ENCODE measurements at regions of chr14 and their contacts with region 1.

Region 1: DNA sequence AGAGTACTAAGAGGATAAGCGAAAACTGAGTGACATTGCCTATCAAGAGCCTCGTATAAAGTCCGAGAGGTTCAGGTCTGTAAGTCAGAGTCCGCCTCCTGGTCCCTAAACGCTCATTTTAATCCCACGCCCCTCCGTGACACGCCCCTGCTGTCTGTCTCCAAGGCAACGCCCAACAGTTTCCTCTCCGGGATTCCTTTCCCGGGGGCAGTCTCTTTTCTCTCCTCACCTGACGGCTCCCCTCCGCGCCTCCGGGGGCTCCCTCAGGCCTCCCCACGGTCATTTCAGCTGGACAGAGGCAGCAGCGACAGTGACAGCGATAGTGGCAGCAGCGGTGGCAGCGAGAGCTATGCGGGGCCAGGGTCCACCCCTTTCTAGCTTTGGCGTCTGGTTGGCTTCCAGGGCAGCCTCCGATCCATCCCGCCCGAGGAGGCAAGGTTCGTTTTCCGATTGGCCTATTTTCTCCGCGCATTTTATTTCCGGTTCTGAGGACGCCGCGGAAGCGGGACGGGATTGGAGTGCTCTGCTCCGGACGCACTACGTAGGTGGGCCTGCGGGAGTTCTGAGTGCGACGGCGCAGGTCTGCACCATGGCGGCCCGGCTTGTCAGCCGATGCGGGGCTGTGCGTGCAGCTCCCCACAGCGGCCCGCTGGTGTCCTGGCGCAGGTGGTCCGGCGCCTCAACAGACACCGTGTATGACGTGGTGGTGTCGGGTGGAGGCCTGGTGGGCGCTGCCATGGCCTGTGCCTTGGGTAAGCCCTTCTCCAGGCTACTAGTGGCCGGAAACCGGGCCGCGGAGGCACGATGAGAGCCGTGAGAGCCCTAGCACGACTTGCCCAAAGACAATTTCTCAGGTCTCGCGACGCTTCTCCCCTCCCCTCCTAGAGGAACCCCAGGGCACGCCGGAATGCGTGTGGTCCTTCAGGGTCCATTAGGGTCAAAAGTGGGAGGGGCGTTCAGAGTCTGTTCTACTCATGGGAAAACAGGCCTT is at the starts of genes COQ6 and FAM161B:
- DNase-seq: peak; percentile 82 to 98 (median 90)
- ATAC-seq: peak; percentile 92
- H3K4me3 ChIP-seq: peak within 1 kb of the TSS; percentile 74 to 83
- H3K4me3 Mint-ChIP-seq: peak within 1 kb of the TSS; percentile 98
- H3K27ac ChIP-seq: peak within 1 kb of the TSS; percentile 93 to 95
- H3K27ac Mint-ChIP-seq: peak within 1 kb of the TSS; percentile 96
- H3K4me1 ChIP-seq: peaks cover 10% of the 10 kb centered on the region
- H3K4me1 Mint-ChIP-seq: peaks cover 26% of the 10 kb centered on the region
- H3K27me3 ChIP-seq: no peaks in the 10 kb centered on the region
- H3K27me3 Mint-ChIP-seq: no peaks in the 10 kb centered on the region
- CTCF ChIP-seq: no peak
- total RNA-seq, gene COQ6: 33.9 to 44.4 TPM
- total RNA-seq, gene FAM161B: 1.9 to 3.2 TPM

Region 2: DNA sequence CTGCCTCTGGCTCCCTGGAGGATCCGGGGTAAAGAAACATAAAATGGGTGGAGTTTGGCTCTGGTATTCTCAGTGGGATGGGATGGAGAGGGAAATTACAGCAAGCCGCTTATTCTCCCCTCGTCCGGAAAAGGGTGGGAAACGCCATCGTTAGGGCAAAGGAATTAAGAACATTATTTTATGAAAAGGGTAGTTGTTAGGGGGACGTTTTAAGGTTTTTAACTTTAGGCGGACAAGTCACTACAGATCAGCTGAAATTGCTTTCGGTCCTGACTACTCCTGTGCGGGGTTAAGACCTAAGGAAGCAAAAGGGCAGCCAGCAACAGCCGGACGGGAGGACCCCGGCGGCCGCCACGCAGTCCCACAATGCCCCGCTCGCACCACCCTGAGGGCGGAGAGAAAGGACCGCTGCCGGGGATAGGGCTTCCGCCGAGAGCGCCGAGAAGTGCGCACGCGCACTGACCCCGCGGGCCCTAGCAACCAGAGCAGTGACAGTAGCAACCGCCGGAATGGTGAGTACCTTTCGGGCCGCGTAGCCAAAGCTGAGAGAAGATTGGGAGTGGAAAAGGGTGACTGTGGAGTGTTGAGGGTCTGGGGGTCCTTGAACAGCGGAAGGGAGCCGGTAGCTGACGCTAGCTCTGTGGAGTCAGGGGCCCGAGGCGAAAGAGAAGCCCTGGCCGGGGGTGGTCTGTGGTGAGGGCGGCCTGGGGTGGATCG is 305.4 kb before region 1 on chr14 and contains the start of gene DNAL1:
- CTCF ChIA-PET with region 1: no interaction called
- POLR2A ChIA-PET with region 1: no interaction called
- intact Hi-C with region 1: loop called in 1 of 2 experiments (anchors 1 kb)
- DNase-seq: peak; percentile 83 to 94 (median 90)
- ATAC-seq: peak; percentile 97
- H3K4me3 ChIP-seq: peak within 1 kb of the TSS; percentile 67 to 72
- H3K4me3 Mint-ChIP-seq: peak within 1 kb of the TSS; percentile 89
- H3K27ac ChIP-seq: peak within 1 kb of the TSS; percentile 61 to 76
- H3K27ac Mint-ChIP-seq: peak within 1 kb of the TSS; percentile 85
- H3K4me1 ChIP-seq: peaks cover 15% of the 10 kb centered on the region
- H3K4me1 Mint-ChIP-seq: peaks cover 17% of the 10 kb centered on the region
- H3K27me3 ChIP-seq: no peaks in the 10 kb centered on the region
- H3K27me3 Mint-ChIP-seq: no peaks in the 10 kb centered on the region
- CTCF ChIP-seq: no peak
- total RNA-seq, gene DNAL1: 2.8 to 3.3 TPM

Region 3: DNA sequence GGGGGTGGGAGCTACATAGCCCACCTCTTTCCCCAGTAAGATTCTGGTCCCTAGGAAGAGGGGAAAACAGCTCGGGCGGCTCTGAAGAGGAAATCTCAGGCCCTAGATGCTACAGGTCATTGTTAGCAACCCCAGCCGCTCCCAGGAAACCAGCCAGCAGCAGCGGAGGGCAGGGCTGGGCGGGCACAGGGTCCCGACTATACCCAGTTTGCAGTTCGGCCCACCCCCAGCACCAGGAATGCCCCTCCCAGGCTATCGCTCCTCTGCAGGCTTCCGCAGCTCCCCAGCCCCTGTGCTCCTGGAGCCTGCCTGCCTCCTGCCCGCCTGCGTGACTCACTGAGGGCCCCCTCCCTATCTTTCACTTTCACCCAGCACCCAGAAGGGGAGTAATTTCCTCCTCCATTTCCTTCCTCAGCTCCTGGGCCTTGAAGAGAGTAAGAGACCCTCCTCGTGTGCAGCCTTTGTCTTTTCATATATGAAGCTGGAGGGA is 208.6 kb before region 1 on chr14:
- CTCF ChIA-PET with region 1: no interaction called
- POLR2A ChIA-PET with region 1: no interaction called
- intact Hi-C with region 1: loop called in 1 of 2 experiments (anchors 5 kb)
- DNase-seq: peak in 7 of 9 experiments; percentile 61 to 86 (median 75)
- ATAC-seq: peak; percentile 79
- H3K4me3 ChIP-seq: peak overlapping the region; percentile 25 to 42
- H3K4me3 Mint-ChIP-seq: peak overlapping the region; percentile 80
- H3K27ac ChIP-seq: peak overlapping the region; percentile 29 to 83
- H3K27ac Mint-ChIP-seq: peak overlapping the region; percentile 94
- H3K4me1 ChIP-seq: peaks cover 82% of the 10 kb centered on the region
- H3K4me1 Mint-ChIP-seq: peaks cover 74% of the 10 kb centered on the region
- H3K27me3 ChIP-seq: no peaks in the 10 kb centered on the region
- H3K27me3 Mint-ChIP-seq: no peaks in the 10 kb centered on the region
- CTCF ChIP-seq: no peak

Region 4: DNA sequence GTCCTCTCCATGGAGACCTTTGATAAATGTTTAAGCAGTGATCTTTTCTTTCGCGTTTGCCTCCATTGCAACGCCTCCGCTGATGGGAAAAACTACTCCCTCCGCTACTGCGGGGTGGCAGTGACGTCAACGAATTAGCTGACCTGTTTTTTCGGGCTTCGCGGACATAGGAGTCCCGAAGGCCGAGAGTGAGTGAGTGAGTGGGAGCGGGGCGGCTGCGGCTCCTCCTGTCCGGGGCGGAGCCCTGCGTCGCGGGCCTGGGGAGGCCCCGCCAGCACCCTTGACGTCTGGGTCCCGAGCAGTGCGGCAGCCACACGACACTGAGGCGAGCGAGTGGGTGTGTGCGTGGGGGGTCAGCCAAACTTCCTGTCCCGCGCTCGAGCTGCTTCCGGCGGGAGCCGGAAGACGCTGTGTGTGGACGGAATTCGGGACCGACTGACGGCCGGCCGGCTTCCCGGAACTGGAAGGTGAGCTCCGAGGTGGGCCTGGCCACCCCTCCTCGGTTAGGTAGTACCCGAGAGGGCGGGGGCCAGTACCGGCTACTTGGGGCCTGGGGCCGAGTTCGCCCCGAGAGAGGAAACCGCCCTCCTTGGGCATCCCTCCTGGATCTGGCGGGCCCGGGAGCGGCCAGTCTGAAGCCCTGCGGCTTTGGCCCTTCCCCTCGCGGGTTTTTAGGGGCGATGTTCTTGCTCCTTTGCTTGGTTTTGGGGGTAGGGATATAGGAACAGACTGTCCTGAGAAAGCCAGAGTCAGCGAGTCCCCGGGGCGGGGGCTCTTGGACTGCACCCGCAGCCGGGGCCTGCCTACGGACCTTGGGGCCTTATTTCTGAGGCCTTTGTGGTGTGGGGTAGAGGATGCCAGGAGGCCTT is 63.4 kb before region 1 on chr14 and contains the start of gene ZNF410:
- CTCF ChIA-PET with region 1: no interaction called
- POLR2A ChIA-PET with region 1: interaction called, 6 read pairs
- intact Hi-C with region 1: loop called (anchors 2 kb)
- DNase-seq: peak; percentile 70 to 95 (median 85)
- ATAC-seq: peak; percentile 98
- H3K4me3 ChIP-seq: peak within 1 kb of the TSS; percentile 90
- H3K4me3 Mint-ChIP-seq: peak within 1 kb of the TSS; percentile 98
- H3K27ac ChIP-seq: peak within 1 kb of the TSS; percentile 91 to 99
- H3K27ac Mint-ChIP-seq: peak within 1 kb of the TSS; percentile 99
- H3K4me1 ChIP-seq: peaks cover 19% of the 10 kb centered on the region
- H3K4me1 Mint-ChIP-seq: peaks cover 46% of the 10 kb centered on the region
- H3K27me3 ChIP-seq: no peaks in the 10 kb centered on the region
- H3K27me3 Mint-ChIP-seq: no peaks in the 10 kb centered on the region
- CTCF ChIP-seq: no peak
- total RNA-seq, gene ZNF410: 86.6 to 89.2 TPM

Region 5: GRCh38 chr14:74084277-74085046 is 134.4 kb after region 1 on chr14 and contains the starts of genes ALDH6A1 and LIN52:
- CTCF ChIA-PET with region 1: no interaction called
- POLR2A ChIA-PET with region 1: no interaction called
- intact Hi-C with region 1: loop called (anchors 1 kb)
- DNase-seq: peak; percentile 100
- ATAC-seq: peak; percentile 85
- H3K4me3 ChIP-seq: peak within 1 kb of the TSS; percentile 80 to 90
- H3K4me3 Mint-ChIP-seq: peak within 1 kb of the TSS; percentile 98
- H3K27ac ChIP-seq: peak within 1 kb of the TSS; percentile 70 to 73
- H3K27ac Mint-ChIP-seq: peak within 1 kb of the TSS; percentile 96
- H3K4me1 ChIP-seq: peaks cover 19% of the 10 kb centered on the region
- H3K4me1 Mint-ChIP-seq: peaks cover 33% of the 10 kb centered on the region
- H3K27me3 ChIP-seq: no peaks in the 10 kb centered on the region
- H3K27me3 Mint-ChIP-seq: no peaks in the 10 kb centered on the region
- CTCF ChIP-seq: no peak
- total RNA-seq, gene ALDH6A1: 3.8 to 4.0 TPM
- total RNA-seq, gene LIN52: 6.1 to 6.8 TPM

Measured in CD8-positive, alpha-beta T cell (primary cell).